ENCODE measurements at regions of chr19 and their contacts with region 1.

Region 1: DNA sequence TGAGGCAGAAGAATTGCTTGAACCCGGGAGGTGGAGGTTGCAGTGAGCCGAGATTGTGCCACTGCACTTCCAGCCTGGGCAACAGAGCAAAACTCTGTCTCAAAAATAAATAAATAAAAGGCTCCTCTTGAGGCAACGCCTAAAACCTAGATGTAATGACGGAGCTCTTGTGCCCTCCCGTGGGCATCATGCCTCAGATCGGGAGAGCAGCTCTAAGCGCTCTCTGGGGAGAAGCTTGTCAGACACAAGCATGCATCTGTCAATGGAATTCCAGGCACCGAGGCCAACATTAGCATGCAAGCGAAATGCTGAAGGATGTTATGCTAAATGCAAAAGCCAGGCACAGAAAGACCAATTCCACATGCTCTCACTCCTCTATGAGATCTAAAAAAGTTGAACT is 45.6 kb upstream of the MRI1 start:
- DNase-seq: no peak
- H3K4me3 Mint-ChIP-seq: no peak overlapping the region
- H3K27ac Mint-ChIP-seq: no peak overlapping the region
- H3K4me1 Mint-ChIP-seq: peaks cover 2% of the 10 kb centered on the region
- H3K27me3 Mint-ChIP-seq: peaks cover 13% of the 10 kb centered on the region

Region 2: DNA sequence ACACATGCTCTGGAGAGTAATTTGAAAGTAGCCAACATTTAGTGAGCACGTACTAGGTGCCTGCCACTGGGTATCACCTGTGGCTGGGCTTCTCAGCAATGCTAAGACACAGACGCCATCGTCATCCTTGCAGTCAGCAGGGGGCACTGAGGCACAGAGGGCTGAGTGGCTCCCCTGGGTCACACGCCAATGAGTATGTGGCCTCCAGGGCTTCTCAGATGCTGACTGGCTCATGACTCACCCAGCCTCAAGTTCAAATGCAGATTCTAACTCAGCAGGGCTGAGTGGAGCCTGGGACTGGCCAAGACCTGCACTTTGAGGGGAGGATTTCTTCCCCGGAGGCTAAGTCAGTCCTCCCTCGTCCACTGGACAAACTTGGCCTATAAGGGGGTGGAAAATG is 97.3 kb before region 1 on chr19:
- CTCF ChIA-PET with region 1: interaction called, 3 read pairs
- intact Hi-C with region 1: loop called (anchors 1 kb)
- DNase-seq: peak; percentile 85
- H3K4me3 Mint-ChIP-seq: no peak overlapping the region
- H3K27ac Mint-ChIP-seq: no peak overlapping the region
- H3K4me1 Mint-ChIP-seq: peaks cover 2% of the 10 kb centered on the region
- H3K27me3 Mint-ChIP-seq: peaks cover 49% of the 10 kb centered on the region